ENCODE measurements at regions of chr4 and their contacts with region 1.

Region 1: GRCh38 chr4:58042176-58042575 is 932.0 kb upstream of the IGFBP7 start:
- DNase-seq: no peak
- ATAC-seq: no peak
- H3K4me3 ChIP-seq: no peak overlapping the region
- H3K4me3 Mint-ChIP-seq: no peak overlapping the region
- H3K27ac ChIP-seq: no peak overlapping the region
- H3K27ac Mint-ChIP-seq: no peak overlapping the region
- H3K4me1 ChIP-seq: no peaks in the 10 kb centered on the region
- H3K4me1 Mint-ChIP-seq: no peaks in the 10 kb centered on the region
- H3K27me3 ChIP-seq: no peaks in the 10 kb centered on the region
- H3K27me3 Mint-ChIP-seq: no peaks in the 10 kb centered on the region
- CTCF ChIP-seq: no peak

Region 2: GRCh38 chr4:57989430-57989829 is 52.7 kb before region 1 on chr4:
- CTCF ChIA-PET with region 1: no interaction called
- POLR2A ChIA-PET with region 1: no interaction called
- intact Hi-C with region 1: loop called in 1 of 2 experiments (anchors 5 kb)
- DNase-seq: no peak
- ATAC-seq: no peak
- H3K4me3 ChIP-seq: no peak overlapping the region
- H3K4me3 Mint-ChIP-seq: no peak overlapping the region
- H3K27ac ChIP-seq: no peak overlapping the region
- H3K27ac Mint-ChIP-seq: no peak overlapping the region
- H3K4me1 ChIP-seq: no peaks in the 10 kb centered on the region
- H3K4me1 Mint-ChIP-seq: no peaks in the 10 kb centered on the region
- H3K27me3 ChIP-seq: no peaks in the 10 kb centered on the region
- H3K27me3 Mint-ChIP-seq: no peaks in the 10 kb centered on the region
- CTCF ChIP-seq: no peak